ENCODE measurements at regions of chr6 and their contacts with region 1.

Region 1: DNA sequence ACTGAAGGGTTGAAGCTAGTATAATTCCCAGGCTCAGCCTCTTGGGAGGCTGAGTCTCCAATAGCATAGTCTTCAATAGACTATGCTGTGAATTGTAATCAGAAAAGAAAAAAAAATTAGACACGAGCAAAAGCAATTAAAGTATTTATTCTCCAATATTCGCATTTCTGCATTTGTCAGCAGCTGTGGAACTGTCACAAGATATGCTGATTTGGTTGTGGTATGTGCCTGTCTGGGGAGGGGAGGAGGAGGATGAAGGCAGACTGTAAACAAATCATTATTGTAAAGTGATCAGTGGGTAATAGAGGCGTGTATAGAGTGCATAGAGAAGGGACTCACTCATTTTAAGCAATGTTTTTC is 10.1 kb upstream of the BICRAL start:
- DNase-seq: peak in 4 of 5 donors; percentile 75 to 79 (median 77)
- H3K4me3 ChIP-seq: peak overlapping the region; percentile 7 to 11
- H3K4me3 Mint-ChIP-seq: peak overlapping the region; percentile 72 to 90 (median 84)
- H3K27ac ChIP-seq: peak overlapping the region; percentile 89
- H3K27ac Mint-ChIP-seq: peak overlapping the region; percentile 97 to 100 (median 100)
- H3K4me1 ChIP-seq: peaks cover 77% of the 10 kb centered on the region
- H3K4me1 Mint-ChIP-seq: peaks cover 54 to 88% (median 70%) of the 10 kb centered on the region in 4 donors
- H3K27me3 ChIP-seq: no peaks in the 10 kb centered on the region
- H3K27me3 Mint-ChIP-seq: no peaks in the 10 kb centered on the region

Region 2: DNA sequence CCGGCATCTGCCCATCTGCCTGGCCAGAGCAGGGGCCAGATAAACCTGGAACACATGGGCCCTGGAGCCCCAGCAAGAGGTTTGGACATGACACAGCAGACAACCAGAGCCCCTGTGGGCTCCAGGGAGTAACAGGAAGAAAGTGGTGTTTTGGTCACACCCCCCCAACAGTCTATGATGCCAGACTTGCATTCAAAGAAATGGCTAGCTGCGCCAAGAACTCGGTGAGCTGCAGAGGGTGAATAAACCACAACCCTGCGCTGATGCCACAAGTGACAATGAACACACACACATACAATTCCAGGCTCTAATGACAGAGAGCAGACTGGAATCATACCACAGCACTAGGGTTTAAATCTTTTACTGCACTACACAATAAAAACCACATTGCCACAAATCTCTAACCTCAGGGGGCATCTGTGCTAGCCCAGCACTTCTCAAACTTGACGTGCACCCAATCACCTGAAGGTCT is 354.0 kb before region 1 on chr6:
- CTCF ChIA-PET with region 1: no interaction called
- POLR2A ChIA-PET with region 1: no interaction called
- intact Hi-C with region 1: no loop called
- DNase-seq: peak; percentile 45 to 79 (median 63)
- H3K4me3 ChIP-seq: no peak overlapping the region
- H3K4me3 Mint-ChIP-seq: peak overlapping the region; percentile 37 to 76 (median 58)
- H3K27ac ChIP-seq: no peak overlapping the region
- H3K27ac Mint-ChIP-seq: peak overlapping the region; percentile 42 to 85 (median 81)
- H3K4me1 ChIP-seq: peaks cover 44% of the 10 kb centered on the region
- H3K4me1 Mint-ChIP-seq: peaks cover 43 to 81% (median 60%) of the 10 kb centered on the region in 4 donors
- H3K27me3 ChIP-seq: no peaks in the 10 kb centered on the region
- H3K27me3 Mint-ChIP-seq: no peaks in the 10 kb centered on the region

Region 3: GRCh38 chr6:42618686-42619085 is 153.0 kb before region 1 on chr6:
- CTCF ChIA-PET with region 1: no interaction called
- POLR2A ChIA-PET with region 1: no interaction called
- intact Hi-C with region 1: no loop called
- DNase-seq: no peak
- H3K4me3 ChIP-seq: no peak overlapping the region
- H3K4me3 Mint-ChIP-seq: no peak overlapping the region
- H3K27ac ChIP-seq: no peak overlapping the region
- H3K27ac Mint-ChIP-seq: peak overlapping the region in 1 of 7 donors; percentile 0
- H3K4me1 ChIP-seq: no peaks in the 10 kb centered on the region
- H3K4me1 Mint-ChIP-seq: peaks cover 0 to 3% (median 0%) of the 10 kb centered on the region in 4 donors
- H3K27me3 ChIP-seq: no peaks in the 10 kb centered on the region
- H3K27me3 Mint-ChIP-seq: no peaks in the 10 kb centered on the region

Region 4: GRCh38 chr6:42692137-42692911 is 79.4 kb before region 1 on chr6:
- CTCF ChIA-PET with region 1: no interaction called
- POLR2A ChIA-PET with region 1: interaction called, 12 read pairs
- intact Hi-C with region 1: no loop called
- DNase-seq: no peak
- H3K4me3 ChIP-seq: no peak overlapping the region
- H3K4me3 Mint-ChIP-seq: no peak overlapping the region
- H3K27ac ChIP-seq: no peak overlapping the region
- H3K27ac Mint-ChIP-seq: peak overlapping the region in 5 of 7 donors; percentile 25 to 62 (median 29)
- H3K4me1 ChIP-seq: peaks cover 12% of the 10 kb centered on the region
- H3K4me1 Mint-ChIP-seq: peaks cover 15 to 25% (median 20%) of the 10 kb centered on the region in 4 donors
- H3K27me3 ChIP-seq: no peaks in the 10 kb centered on the region
- H3K27me3 Mint-ChIP-seq: no peaks in the 10 kb centered on the region

Region 5: DNA sequence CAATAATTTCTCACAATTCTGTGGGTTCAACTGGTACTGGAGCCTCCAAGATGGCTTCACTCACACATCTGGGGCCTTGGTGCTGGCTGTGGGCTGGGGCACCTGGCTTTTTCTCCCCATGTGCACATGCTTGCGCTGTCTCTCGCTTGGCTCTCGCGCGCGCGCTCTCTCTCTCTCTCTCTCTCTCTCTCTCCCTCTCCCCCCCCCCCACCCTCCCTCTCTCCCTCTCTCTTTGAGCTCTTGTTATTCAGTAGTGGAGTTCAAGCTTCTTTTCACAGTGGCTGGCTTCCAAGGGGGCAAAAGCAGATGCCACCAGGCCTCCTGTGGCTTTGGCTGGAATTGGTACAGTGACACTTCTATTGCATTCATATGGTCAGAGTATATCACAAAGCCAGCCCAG is 15.0 kb before region 1 on chr6:
- CTCF ChIA-PET with region 1: interaction called, 3 read pairs
- POLR2A ChIA-PET with region 1: interaction called, 1,692 read pairs
- intact Hi-C with region 1: no loop called
- DNase-seq: no peak
- H3K4me3 ChIP-seq: no peak overlapping the region
- H3K4me3 Mint-ChIP-seq: no peak overlapping the region
- H3K27ac ChIP-seq: no peak overlapping the region
- H3K27ac Mint-ChIP-seq: peak overlapping the region in 1 of 7 donors; percentile 81
- H3K4me1 ChIP-seq: peaks cover under 1% of the 10 kb centered on the region
- H3K4me1 Mint-ChIP-seq: peaks cover 18 to 44% (median 33%) of the 10 kb centered on the region in 4 donors
- H3K27me3 ChIP-seq: no peaks in the 10 kb centered on the region
- H3K27me3 Mint-ChIP-seq: no peaks in the 10 kb centered on the region

Region 6: GRCh38 chr6:42819803-42820511 is 48.2 kb after region 1 on chr6:
- CTCF ChIA-PET with region 1: no interaction called
- POLR2A ChIA-PET with region 1: interaction called, 14 read pairs
- intact Hi-C with region 1: no loop called
- DNase-seq: peak in 4 of 5 donors; percentile 17 to 24 (median 22)
- H3K4me3 ChIP-seq: no peak overlapping the region
- H3K4me3 Mint-ChIP-seq: peak overlapping the region in 2 of 8 donors; percentile 11 to 34
- H3K27ac ChIP-seq: no peak overlapping the region
- H3K27ac Mint-ChIP-seq: peak overlapping the region; percentile 35 to 79 (median 57)
- H3K4me1 ChIP-seq: peaks cover 15% of the 10 kb centered on the region
- H3K4me1 Mint-ChIP-seq: peaks cover 16 to 30% (median 25%) of the 10 kb centered on the region in 4 donors
- H3K27me3 ChIP-seq: no peaks in the 10 kb centered on the region
- H3K27me3 Mint-ChIP-seq: no peaks in the 10 kb centered on the region